ENCODE measurements at regions of chr11 and their contacts with region 1.

Region 1: DNA sequence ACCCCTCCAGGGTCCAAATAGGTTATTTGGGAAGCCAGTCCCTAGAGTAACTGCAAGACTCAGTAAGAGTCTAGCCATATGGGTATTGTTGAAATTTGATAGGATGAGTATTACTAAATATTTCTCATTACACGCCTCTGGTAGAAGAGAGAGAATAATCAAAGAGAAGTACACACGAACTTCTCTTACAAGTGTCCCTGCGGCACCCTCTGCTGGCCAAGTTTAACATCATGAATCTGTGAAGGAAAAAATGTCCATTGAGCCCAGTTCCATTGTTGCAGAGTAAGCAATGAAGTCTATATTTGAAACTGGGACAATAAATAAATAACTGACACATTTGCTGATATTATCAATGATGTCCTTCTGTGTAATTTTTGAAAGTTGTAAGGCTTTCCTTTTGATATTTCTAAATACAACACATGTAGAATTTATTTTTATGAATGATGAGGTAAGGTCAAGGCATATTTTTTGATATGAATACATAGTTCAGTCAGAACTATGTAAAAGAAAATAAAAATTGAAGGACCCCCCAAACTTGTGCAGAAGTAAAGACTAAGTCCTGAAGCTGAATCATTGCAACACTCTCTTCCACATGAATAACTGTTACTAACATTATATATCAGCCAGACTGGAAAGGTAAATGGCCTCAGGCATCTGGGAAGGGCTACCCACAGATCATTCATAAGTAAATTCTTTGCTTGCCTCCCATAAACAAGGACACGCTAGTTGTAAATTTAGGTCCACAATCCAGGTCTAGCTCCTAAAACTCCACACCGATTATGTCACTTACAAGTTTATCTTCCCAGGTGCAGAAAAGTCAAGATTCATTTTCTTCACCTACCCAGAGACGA is 10.0 kb downstream of the OR51L1 start:
- DNase-seq: peak; percentile 16 to 72 (median 38)
- ATAC-seq: peak; percentile 55 to 87 (median 80)
- H3K4me3 ChIP-seq: no peak overlapping the region
- H3K27ac ChIP-seq: no peak overlapping the region
- H3K4me1 ChIP-seq: no peaks in the 10 kb centered on the region
- H3K27me3 ChIP-seq: no peaks in the 10 kb centered on the region
- CTCF ChIP-seq: peak; percentile 11 to 52 (median 46)

Region 2: DNA sequence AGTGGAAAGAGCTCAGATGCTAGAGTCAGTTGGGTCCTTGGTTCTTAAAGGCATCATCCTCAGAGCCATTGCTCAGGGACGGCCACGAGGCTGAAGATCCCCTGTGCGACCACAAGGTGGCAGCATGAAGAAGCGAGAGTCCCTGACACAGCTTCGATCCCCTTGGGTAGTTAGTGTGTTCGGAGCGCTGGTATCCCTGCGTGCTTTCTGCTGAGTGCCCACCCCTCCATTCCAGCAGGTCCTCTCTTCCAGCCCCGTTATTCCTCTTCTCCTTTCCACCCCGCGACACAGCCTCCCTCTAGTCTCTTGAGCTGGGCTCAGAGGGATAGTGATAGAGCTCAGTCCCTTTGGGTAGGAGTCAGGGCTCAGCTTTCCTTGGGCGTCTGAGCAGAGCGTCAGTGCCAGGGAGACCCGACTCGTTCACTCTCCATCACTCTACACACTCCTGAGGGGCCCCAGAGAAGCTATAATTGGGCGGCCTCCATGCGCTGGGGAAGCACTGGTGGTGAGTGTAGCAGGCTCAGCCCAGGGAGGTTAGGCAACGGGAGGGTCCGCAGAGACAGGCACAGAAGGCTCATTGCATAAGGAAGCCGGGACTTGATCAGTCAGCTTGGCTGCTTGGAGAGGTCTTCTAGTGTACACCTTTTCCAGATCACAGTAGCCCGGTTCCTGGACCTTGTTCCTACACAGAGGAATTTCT is 367.5 kb before region 1 on chr11 and contains the start of gene OR51D1:
- intact Hi-C with region 1: loop called in 1 of 3 experiments (anchors 5 kb)
- DNase-seq: peak; percentile 42 to 86 (median 76)
- ATAC-seq: peak; percentile 94 to 100 (median 99)
- H3K4me3 ChIP-seq: peak within 1 kb of the TSS in 1 of 4 donors; percentile 11
- H3K27ac ChIP-seq: no peak within 1 kb of the TSS
- H3K4me1 ChIP-seq: no peaks in the 10 kb centered on the region
- H3K27me3 ChIP-seq: peaks cover 0 to 5% (median 0%) of the 10 kb centered on the region in 4 donors
- CTCF ChIP-seq: peak; percentile 81 to 91 (median 89)
- total RNA-seq, gene OR51D1: not detected